B cell (primary cell): ENCODE measurements at regions of chr2 and their contacts with region 1.

Region 1: GRCh38 chr2:64260817-64261216 is 116.6 kb upstream of the PELI1 start:
- DNase-seq: peak; percentile 82
- ATAC-seq: peak; percentile 94
- H3K4me3 ChIP-seq: peak overlapping the region; percentile 2 to 51 (median 38)
- H3K4me3 Mint-ChIP-seq: peak overlapping the region; percentile 74
- H3K27ac ChIP-seq: peak overlapping the region; percentile 46 to 85
- H3K27ac Mint-ChIP-seq: peak overlapping the region; percentile 87
- H3K4me1 ChIP-seq: peaks cover 26 to 31% of the 10 kb centered on the region in 2 donors
- H3K4me1 Mint-ChIP-seq: peaks cover 50% of the 10 kb centered on the region
- H3K27me3 ChIP-seq: no peaks in the 10 kb centered on the region
- H3K27me3 Mint-ChIP-seq: no peaks in the 10 kb centered on the region
- CTCF ChIP-seq: no peak

Region 2: GRCh38 chr2:64045938-64046337 is 214.9 kb before region 1 on chr2:
- CTCF ChIA-PET with region 1: interaction called, 6 read pairs
- POLR2A ChIA-PET with region 1: no interaction called
- intact Hi-C with region 1: loop called (anchors 5 kb)
- DNase-seq: no peak
- ATAC-seq: no peak
- H3K4me3 ChIP-seq: no peak overlapping the region
- H3K4me3 Mint-ChIP-seq: no peak overlapping the region
- H3K27ac ChIP-seq: no peak overlapping the region
- H3K27ac Mint-ChIP-seq: no peak overlapping the region
- H3K4me1 ChIP-seq: peaks cover 6 to 9% of the 10 kb centered on the region in 2 donors
- H3K4me1 Mint-ChIP-seq: peaks cover 8% of the 10 kb centered on the region
- H3K27me3 ChIP-seq: no peaks in the 10 kb centered on the region
- H3K27me3 Mint-ChIP-seq: no peaks in the 10 kb centered on the region
- CTCF ChIP-seq: no peak

Region 3: GRCh38 chr2:64214281-64215115 is 46.3 kb before region 1 on chr2:
- CTCF ChIA-PET with region 1: no interaction called
- POLR2A ChIA-PET with region 1: interaction called, 6 read pairs
- intact Hi-C with region 1: loop called (anchors 2 kb)
- DNase-seq: peak; percentile 83
- ATAC-seq: peak; percentile 75
- H3K4me3 ChIP-seq: peak overlapping the region in 4 of 5 experiments; percentile 7 to 48 (median 26)
- H3K4me3 Mint-ChIP-seq: peak overlapping the region; percentile 80
- H3K27ac ChIP-seq: peak overlapping the region; percentile 89 to 98
- H3K27ac Mint-ChIP-seq: peak overlapping the region; percentile 99
- H3K4me1 ChIP-seq: peaks cover 59 to 69% of the 10 kb centered on the region in 2 donors
- H3K4me1 Mint-ChIP-seq: peaks cover 62% of the 10 kb centered on the region
- H3K27me3 ChIP-seq: no peaks in the 10 kb centered on the region
- H3K27me3 Mint-ChIP-seq: no peaks in the 10 kb centered on the region
- CTCF ChIP-seq: no peak

Region 4: GRCh38 chr2:64228126-64228678 is 32.6 kb before region 1 on chr2:
- CTCF ChIA-PET with region 1: no interaction called
- POLR2A ChIA-PET with region 1: interaction called, 3 read pairs
- intact Hi-C with region 1: loop called (anchors 1 kb)
- DNase-seq: peak; percentile 75
- ATAC-seq: peak; percentile 98
- H3K4me3 ChIP-seq: peak overlapping the region; percentile 46 to 81 (median 72)
- H3K4me3 Mint-ChIP-seq: peak overlapping the region; percentile 98
- H3K27ac ChIP-seq: peak overlapping the region; percentile 60 to 63
- H3K27ac Mint-ChIP-seq: peak overlapping the region; percentile 98
- H3K4me1 ChIP-seq: peaks cover 25 to 28% of the 10 kb centered on the region in 2 donors
- H3K4me1 Mint-ChIP-seq: peaks cover 32% of the 10 kb centered on the region
- H3K27me3 ChIP-seq: no peaks in the 10 kb centered on the region
- H3K27me3 Mint-ChIP-seq: no peaks in the 10 kb centered on the region
- CTCF ChIP-seq: no peak